Calu3 (cell line): ENCODE measurements at regions of chr1 and their contacts with region 1.

Region 1: GRCh38 chr1:208132287-208132883 is 111.8 kb downstream of the PLXNA2 start:
- DNase-seq: peak; percentile 97
- H3K4me3 Mint-ChIP-seq: peak overlapping the region; percentile 37
- H3K27ac Mint-ChIP-seq: no peak overlapping the region
- H3K4me1 Mint-ChIP-seq: peaks cover 21% of the 10 kb centered on the region
- H3K27me3 Mint-ChIP-seq: no peaks in the 10 kb centered on the region
- CTCF ChIP-seq: peak; percentile 87

Region 2: DNA sequence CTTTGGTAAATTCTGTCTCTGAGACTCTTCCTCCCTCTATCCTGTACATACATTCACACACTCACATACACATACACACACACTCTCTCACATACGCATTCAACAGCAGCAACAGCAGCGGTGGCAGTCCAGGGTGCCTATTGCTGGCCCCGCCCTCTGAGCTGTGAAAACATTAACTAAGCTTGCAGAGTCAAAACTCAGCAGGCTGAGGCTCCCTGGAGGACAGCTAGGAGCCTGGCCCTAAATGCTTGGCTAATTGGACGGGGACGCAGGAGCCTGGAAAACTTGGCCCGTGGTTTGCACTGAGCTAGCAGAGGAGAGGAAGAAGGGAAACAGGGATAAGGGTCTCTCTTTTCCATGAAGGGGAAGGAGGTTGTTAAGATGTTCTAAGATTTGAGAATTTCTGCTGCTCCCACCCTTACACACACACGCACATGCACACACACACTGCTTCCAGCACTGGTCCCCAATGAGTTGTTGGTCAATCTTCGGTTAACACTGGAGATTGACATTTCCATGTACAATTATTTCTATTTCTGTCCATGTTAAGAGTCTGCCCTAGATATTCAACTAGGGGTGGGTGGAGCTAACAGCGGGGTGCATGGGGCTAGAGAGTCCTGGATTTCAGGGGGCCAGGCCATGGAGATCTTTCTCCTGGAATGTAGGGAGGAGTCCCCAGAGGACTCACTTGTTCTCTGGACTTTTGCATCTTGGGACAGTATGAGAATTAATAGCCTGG is 17.6 kb after region 1 on chr1:
- CTCF ChIA-PET with region 1: interaction called, 11 read pairs
- intact Hi-C with region 1: no loop called
- DNase-seq: peak; percentile 57
- H3K4me3 Mint-ChIP-seq: no peak overlapping the region
- H3K27ac Mint-ChIP-seq: no peak overlapping the region
- H3K4me1 Mint-ChIP-seq: peaks cover 14% of the 10 kb centered on the region
- H3K27me3 Mint-ChIP-seq: no peaks in the 10 kb centered on the region
- CTCF ChIP-seq: no peak